ENCODE measurements at regions of chr9 and their contacts with region 1.

Region 1: DNA sequence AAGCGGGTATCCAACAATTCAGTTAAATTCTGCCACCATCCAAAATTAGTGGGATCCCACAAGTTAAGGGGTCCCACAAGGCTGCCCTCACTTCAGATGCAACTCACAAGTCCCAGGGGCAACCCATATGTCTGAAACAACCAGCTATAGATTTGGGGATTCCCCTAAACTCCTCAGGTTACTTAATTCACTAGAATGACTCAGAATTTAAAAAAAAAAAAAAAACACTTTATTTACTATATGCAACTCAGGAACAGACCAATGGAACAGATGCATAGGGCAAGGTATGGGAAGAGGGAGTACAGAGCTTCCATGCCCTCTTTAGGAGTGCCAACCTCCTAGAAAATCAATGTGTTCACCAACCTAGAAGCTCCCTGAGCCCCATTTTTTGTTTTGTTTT is 15.1 kb downstream of the AUH start:
- DNase-seq: peak; percentile 69
- H3K4me3 Mint-ChIP-seq: no peak overlapping the region
- H3K27ac Mint-ChIP-seq: peak overlapping the region; percentile 49
- H3K4me1 Mint-ChIP-seq: peaks cover 40% of the 10 kb centered on the region
- H3K27me3 Mint-ChIP-seq: no peaks in the 10 kb centered on the region

Region 2: GRCh38 chr9:91312717-91313344 is 33.8 kb before region 1 on chr9:
- intact Hi-C with region 1: no loop called
- DNase-seq: no peak
- H3K4me3 Mint-ChIP-seq: no peak overlapping the region
- H3K27ac Mint-ChIP-seq: peak overlapping the region; percentile 13
- H3K4me1 Mint-ChIP-seq: peaks cover 11% of the 10 kb centered on the region
- H3K27me3 Mint-ChIP-seq: no peaks in the 10 kb centered on the region

Region 3: GRCh38 chr9:91359734-91360470 is 13.2 kb after region 1 on chr9:
- intact Hi-C with region 1: loop called (anchors 1 kb)
- DNase-seq: peak; percentile 74
- H3K4me3 Mint-ChIP-seq: peak overlapping the region; percentile 93
- H3K27ac Mint-ChIP-seq: peak overlapping the region; percentile 99
- H3K4me1 Mint-ChIP-seq: peaks cover 58% of the 10 kb centered on the region
- H3K27me3 Mint-ChIP-seq: no peaks in the 10 kb centered on the region

Region 4: DNA sequence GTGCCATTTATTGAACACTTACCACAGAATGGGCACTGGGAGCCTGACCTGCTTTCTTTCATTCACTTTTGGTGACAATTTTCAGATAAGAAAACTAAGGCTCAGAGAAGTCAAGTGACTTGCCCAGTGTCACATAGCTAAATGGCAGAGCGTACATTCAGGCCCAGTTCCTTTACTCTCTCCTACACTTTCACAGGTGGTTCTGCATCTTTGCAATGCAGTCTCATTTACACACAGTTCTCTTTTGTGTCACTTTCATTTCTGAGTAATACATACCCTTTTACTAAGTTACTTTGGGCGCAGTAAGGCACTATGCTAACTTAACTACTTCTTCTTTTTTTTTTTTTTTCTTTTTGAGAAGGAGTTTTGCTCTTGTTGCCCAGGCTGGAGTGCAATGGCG is 68.6 kb after region 1 on chr9:
- intact Hi-C with region 1: loop called (anchors 1 kb)
- DNase-seq: peak; percentile 69
- H3K4me3 Mint-ChIP-seq: peak overlapping the region; percentile 63
- H3K27ac Mint-ChIP-seq: peak overlapping the region; percentile 86
- H3K4me1 Mint-ChIP-seq: peaks cover 79% of the 10 kb centered on the region
- H3K27me3 Mint-ChIP-seq: no peaks in the 10 kb centered on the region

Measured in activated CD4-positive, alpha-beta T cell treated with anti-CD3 and anti-CD28 coated beads, Interleukin-2, amount 10 ng/mL, durations not matched to agents 24 days and 14 days (primary cell).